ENCODE measurements at regions of chr15 and their contacts with region 1.

Region 1: DNA sequence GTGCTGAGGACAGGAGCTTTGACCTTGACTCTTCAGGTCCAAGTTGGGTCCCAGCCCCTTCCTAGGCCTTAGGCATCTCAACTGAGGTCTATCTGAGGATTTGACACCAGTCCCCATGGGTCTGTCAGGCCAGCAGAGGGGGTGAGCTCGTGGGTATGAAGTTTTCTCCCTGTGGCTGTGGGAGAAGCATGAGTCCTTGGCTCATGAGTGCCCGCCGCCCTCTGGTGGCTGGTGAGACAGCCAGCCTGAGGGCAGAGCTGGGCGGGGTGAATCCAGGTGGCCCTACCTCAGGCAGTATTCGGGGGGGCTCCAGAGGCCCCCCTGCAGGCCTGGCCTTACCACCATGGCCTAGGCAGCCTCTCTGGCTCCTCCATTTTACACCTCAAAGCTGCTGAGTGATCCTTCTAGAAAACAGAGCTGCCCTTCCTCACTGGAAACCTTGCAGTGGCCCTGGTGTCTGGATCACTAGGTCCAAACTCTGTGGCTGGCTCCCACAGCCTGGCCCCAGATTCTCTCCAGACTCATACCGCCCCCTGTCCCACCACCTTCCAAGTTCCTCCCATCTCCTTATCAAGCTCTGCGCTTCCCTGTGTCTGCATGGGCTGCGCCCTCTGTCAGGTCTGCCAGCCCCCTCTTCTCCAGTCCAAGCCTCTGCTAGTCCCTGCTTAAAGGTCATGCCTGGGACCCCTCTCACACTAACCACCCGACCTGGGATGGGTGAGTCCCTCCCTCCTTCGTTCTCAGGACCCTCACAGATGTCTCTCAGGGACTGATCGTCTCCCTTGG is 16.1 kb downstream of the SH2D7 start:
- DNase-seq: peak; percentile 43
- ATAC-seq: peak; percentile 84
- H3K4me3 ChIP-seq: no peak overlapping the region
- H3K27ac ChIP-seq: no peak overlapping the region
- H3K4me1 ChIP-seq: peaks cover 22% of the 10 kb centered on the region
- H3K27me3 ChIP-seq: no peaks in the 10 kb centered on the region
- CTCF ChIP-seq: peak; percentile 89 to 97 (median 94)
- EP300 ChIP-seq: no peak
- POLR2A ChIP-seq: no peak
- RAD21 ChIP-seq: peak; percentile 77

Region 2: DNA sequence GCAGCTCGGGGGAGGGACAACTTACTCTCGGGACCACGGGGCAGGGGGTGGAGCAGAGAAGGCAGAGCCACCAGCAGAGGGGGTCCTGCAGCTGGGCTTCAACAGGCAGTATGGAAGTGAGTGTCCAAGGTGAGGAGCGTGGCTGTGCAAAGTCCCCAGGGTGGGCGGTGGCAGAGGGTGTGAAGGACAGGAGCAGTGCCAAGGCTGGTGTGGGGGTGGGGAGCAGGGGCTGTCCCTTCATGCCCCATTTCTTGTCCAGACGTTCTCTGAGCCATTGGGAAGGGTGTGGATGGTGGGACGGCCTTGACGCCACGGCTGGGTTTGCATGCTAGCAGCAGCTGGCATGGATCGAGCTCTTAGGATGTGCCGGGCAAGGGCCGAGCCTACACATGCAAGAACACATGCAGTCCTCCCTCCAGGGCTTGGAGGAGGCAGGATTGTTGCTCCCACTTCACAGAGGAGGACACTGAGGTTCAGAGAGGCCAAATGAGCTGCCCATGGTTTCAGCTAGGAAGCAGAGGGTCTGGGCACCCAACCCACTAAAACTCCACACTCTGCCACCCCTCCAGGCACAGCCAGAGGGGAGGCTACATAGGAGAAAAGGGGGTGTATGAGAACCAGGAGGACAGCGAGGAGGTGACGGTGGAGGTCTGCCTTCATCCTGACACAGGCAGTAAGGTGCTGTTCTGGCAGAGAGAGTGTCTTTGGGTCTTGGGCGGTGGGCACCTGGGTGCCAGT is 124.6 kb before region 1 on chr15:
- CTCF ChIA-PET with region 1: interaction called, 17 read pairs
- POLR2A ChIA-PET with region 1: no interaction called
- RAD21 ChIA-PET with region 1: interaction called, 8 read pairs
- SMC1A ChIA-PET with region 1: interaction called, 7 read pairs
- in situ Hi-C with region 1: no loop called
- intact Hi-C with region 1: no loop called
- DNase-seq: no peak
- ATAC-seq: peak; percentile 19; the same call in 1 of the 3 replicates
- H3K4me3 ChIP-seq: no peak overlapping the region
- H3K27ac ChIP-seq: no peak overlapping the region
- H3K4me1 ChIP-seq: no peaks in the 10 kb centered on the region
- H3K27me3 ChIP-seq: no peaks in the 10 kb centered on the region
- CTCF ChIP-seq: peak in 1 of 3 experiments; percentile 11; a peak in 1 of 6 replicates
- EP300 ChIP-seq: no peak
- POLR2A ChIP-seq: no peak
- RAD21 ChIP-seq: no peak

Region 3: DNA sequence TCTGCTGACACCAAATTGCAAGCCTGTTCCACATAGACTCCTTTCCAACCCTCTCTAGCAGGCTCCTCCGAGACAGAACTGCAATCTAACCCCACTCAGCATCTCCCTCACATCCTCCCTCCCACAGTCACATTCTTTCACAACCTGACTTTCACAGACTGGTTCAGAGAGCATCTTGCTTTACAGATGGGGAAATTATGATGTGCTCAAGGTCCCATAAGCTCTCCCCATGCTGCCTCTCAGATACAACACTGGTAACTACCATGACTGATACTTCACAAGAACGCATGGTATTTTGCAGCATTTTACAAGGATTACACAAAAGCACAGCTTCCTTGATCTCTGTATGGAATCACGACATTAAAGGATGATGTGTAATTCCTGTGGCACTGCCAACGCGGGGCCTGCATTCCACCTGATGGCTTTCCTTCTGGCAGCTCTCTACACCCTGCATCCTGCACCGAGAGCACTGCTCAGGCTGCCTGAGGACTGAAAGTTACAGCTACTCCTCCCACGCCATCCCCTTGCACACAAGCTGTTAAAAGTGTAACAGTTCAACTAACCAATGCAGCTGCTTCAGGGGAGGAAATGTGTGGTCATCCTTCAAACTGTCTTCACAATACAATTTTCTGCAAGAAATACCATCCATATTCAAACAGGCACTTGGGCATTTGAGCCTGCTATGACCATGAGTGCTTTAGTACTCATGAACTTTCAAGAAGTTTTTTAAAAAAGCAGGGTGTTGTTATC is 58.6 kb before region 1 on chr15:
- CTCF ChIA-PET with region 1: interaction called, 33 read pairs
- POLR2A ChIA-PET with region 1: interaction called, 3 read pairs
- RAD21 ChIA-PET with region 1: interaction called, 13 read pairs
- SMC1A ChIA-PET with region 1: interaction called, 10 read pairs
- in situ Hi-C with region 1: no loop called
- intact Hi-C with region 1: no loop called
- DNase-seq: peak; percentile 68
- ATAC-seq: peak; percentile 92
- H3K4me3 ChIP-seq: peak overlapping the region; percentile 45; the same call in 1 of the 2 replicates
- H3K27ac ChIP-seq: peak overlapping the region; percentile 53
- H3K4me1 ChIP-seq: peaks cover 71% of the 10 kb centered on the region
- H3K27me3 ChIP-seq: no peaks in the 10 kb centered on the region
- CTCF ChIP-seq: no peak
- EP300 ChIP-seq: peak; percentile 52 to 84
- POLR2A ChIP-seq: peak; percentile 63
- RAD21 ChIP-seq: no peak

Region 4: GRCh38 chr15:78082106-78083078 is 26.1 kb before region 1 on chr15:
- CTCF ChIA-PET with region 1: interaction called, 191 read pairs
- POLR2A ChIA-PET with region 1: no interaction called
- RAD21 ChIA-PET with region 1: interaction called, 9 read pairs
- SMC1A ChIA-PET with region 1: interaction called, 131 read pairs
- in situ Hi-C with region 1: no loop called
- intact Hi-C with region 1: no loop called
- DNase-seq: no peak
- ATAC-seq: peak; percentile 52
- H3K4me3 ChIP-seq: no peak overlapping the region
- H3K27ac ChIP-seq: no peak overlapping the region
- H3K4me1 ChIP-seq: peaks cover 6% of the 10 kb centered on the region
- H3K27me3 ChIP-seq: no peaks in the 10 kb centered on the region
- CTCF ChIP-seq: no peak
- EP300 ChIP-seq: no peak
- POLR2A ChIP-seq: no peak
- RAD21 ChIP-seq: no peak

Region 5: GRCh38 chr15:78131295-78132061 is 23.0 kb after region 1 on chr15 and contains the start of gene CIB2:
- CTCF ChIA-PET with region 1: interaction called, 16 read pairs
- POLR2A ChIA-PET with region 1: no interaction called
- RAD21 ChIA-PET with region 1: interaction called, 15 read pairs
- SMC1A ChIA-PET with region 1: interaction called, 12 read pairs
- in situ Hi-C with region 1: no loop called
- intact Hi-C with region 1: no loop called
- DNase-seq: no peak
- ATAC-seq: peak; percentile 93
- H3K4me3 ChIP-seq: peak within 1 kb of the TSS; percentile 88
- H3K27ac ChIP-seq: peak within 1 kb of the TSS; percentile 72
- H3K4me1 ChIP-seq: peaks cover 5% of the 10 kb centered on the region
- H3K27me3 ChIP-seq: no peaks in the 10 kb centered on the region
- CTCF ChIP-seq: peak; percentile 65 to 92 (median 73); a peak in 5 of 6 replicates
- EP300 ChIP-seq: no peak
- POLR2A ChIP-seq: peak; percentile 80
- RAD21 ChIP-seq: peak; percentile 73
- polyA plus RNA-seq, gene CIB2: 0.56 to 1.6 TPM

Region 6: GRCh38 chr15:78429477-78429876 is 321.0 kb after region 1 on chr15:
- CTCF ChIA-PET with region 1: interaction called, 3 read pairs
- POLR2A ChIA-PET with region 1: no interaction called
- RAD21 ChIA-PET with region 1: no interaction called
- SMC1A ChIA-PET with region 1: no interaction called
- in situ Hi-C with region 1: loop called (anchors 5 kb)
- intact Hi-C with region 1: loop called (anchors 5 kb)
- DNase-seq: no peak
- ATAC-seq: no peak
- H3K4me3 ChIP-seq: no peak overlapping the region
- H3K27ac ChIP-seq: no peak overlapping the region
- H3K4me1 ChIP-seq: no peaks in the 10 kb centered on the region
- H3K27me3 ChIP-seq: no peaks in the 10 kb centered on the region; a peak in 1 of 4 replicates
- CTCF ChIP-seq: no peak
- EP300 ChIP-seq: no peak
- POLR2A ChIP-seq: no peak
- RAD21 ChIP-seq: no peak